Activated CD4-positive, alpha-beta memory T cell treated with anti-CD3 and anti-CD28 coated beads, Interleukin-2, amount 10 ng/mL, durations not matched to agents 7 days and 5 days (primary cell): ENCODE measurements at regions of chr1 and their contacts with region 1.

Region 1: DNA sequence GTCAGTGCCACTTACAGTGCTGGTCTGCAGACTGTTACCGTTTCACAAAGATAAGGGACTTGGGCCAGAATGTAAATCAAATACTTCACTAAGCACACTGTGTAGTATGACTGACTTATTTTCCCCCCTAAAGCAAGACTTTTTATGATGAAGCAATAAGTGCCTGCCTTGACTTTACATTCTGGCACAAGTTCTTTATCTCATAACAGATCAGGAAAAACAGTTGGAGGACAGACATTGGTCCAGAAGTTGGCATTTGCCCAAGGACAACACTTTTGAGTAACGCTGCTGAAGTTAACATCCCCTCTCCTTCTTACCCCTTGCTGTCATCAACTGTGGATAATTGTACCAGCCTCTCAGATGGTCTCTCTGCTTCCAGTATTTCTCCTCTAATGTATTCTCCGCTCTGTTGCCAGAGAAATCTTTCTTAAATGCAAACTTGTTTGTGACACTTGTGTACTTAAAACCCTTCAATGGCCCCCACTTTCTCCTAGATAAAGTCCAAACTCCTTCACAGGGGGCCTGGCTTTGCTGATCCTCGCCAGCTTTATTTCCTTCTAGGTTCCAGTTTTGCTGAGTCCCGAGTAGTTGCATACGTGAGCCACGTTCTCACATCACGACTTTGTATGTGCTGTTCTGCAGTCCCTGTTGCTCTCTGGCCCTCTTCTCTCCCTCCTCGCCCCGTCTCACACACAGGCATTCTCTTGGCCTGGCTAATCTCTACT is 45.7 kb downstream of the S1PR1 start:
- DNase-seq: no peak
- H3K4me3 Mint-ChIP-seq: no peak overlapping the region
- H3K27ac Mint-ChIP-seq: no peak overlapping the region
- H3K4me1 Mint-ChIP-seq: peaks cover 92% of the 10 kb centered on the region
- H3K27me3 Mint-ChIP-seq: no peaks in the 10 kb centered on the region

Region 2: DNA sequence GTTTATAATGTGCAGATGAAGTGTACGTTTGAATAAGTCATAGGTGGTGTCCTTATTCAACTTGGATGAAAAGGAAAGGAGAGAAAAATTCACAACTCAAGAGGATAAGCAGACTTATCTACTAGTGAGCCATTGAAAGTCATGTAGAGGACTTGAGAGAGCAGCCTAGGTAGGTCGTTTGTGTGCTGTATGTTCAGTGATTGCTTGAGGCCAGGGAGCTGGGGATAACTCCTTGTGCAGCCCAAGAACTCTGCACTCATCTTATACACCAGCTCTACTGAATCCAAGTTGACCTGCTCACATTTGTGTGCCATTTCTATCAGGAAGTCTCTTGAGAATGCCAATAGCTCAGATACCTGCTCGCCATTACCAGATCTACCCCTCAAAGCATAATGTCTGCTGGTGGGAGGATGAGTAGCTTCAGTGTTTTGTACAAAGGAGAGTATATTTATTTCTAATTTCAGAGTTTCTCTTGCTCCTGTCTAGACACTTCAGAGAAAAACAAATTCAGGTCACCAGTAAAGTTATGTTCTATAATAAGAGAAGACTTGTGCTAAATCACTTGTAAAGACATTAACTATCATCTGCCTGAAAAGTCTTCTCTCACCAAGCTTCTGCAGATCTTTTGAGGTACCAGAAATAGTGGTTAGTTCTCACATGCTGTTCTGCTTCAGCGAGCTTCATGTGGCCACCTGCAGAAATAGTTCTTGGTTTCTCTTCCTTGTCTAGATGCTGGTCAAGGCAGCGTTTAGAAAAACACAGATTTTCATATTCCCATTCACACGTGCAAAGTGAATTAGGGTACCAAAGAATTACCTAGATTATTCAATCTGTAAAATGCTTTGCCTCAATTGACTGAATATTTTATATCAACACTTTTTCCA is 34.8 kb before region 1 on chr1:
- CTCF ChIA-PET with region 1: interaction called, 26 read pairs
- POLR2A ChIA-PET with region 1: interaction called, 391 read pairs
- DNase-seq: no peak
- H3K4me3 Mint-ChIP-seq: no peak overlapping the region
- H3K27ac Mint-ChIP-seq: no peak overlapping the region
- H3K4me1 Mint-ChIP-seq: peaks cover 32% of the 10 kb centered on the region
- H3K27me3 Mint-ChIP-seq: no peaks in the 10 kb centered on the region

Region 3: GRCh38 chr1:101257500-101258325 is 24.8 kb before region 1 on chr1:
- CTCF ChIA-PET with region 1: interaction called, 26 read pairs
- POLR2A ChIA-PET with region 1: interaction called, 22 read pairs
- DNase-seq: peak; percentile 64
- H3K4me3 Mint-ChIP-seq: no peak overlapping the region
- H3K27ac Mint-ChIP-seq: peak overlapping the region; percentile 63
- H3K4me1 Mint-ChIP-seq: peaks cover 58% of the 10 kb centered on the region
- H3K27me3 Mint-ChIP-seq: no peaks in the 10 kb centered on the region

Region 4: GRCh38 chr1:101262630-101263348 is 19.7 kb before region 1 on chr1:
- CTCF ChIA-PET with region 1: interaction called, 30 read pairs
- POLR2A ChIA-PET with region 1: interaction called, 57 read pairs
- DNase-seq: peak; percentile 39
- H3K4me3 Mint-ChIP-seq: peak overlapping the region; percentile 23
- H3K27ac Mint-ChIP-seq: peak overlapping the region; percentile 70
- H3K4me1 Mint-ChIP-seq: peaks cover 84% of the 10 kb centered on the region
- H3K27me3 Mint-ChIP-seq: no peaks in the 10 kb centered on the region

Region 5: DNA sequence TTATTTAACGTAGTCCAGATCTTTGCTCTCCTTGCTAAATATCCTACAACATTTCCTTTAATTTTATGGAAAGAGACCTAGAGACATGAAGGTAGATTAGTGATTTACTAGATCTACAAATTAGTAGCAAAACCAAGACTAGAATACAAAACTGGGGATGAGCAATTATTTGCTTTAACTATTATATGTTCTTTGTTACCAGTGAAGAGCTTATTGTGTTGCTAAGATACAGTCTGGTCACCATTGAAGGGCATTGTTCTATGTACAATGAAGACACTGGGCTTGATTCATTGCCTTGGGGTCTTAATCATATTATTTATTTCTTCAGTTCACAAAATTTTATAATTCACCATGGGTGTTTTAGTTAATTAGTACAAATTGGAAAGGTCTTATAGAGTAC is 42.7 kb after region 1 on chr1:
- CTCF ChIA-PET with region 1: no interaction called
- POLR2A ChIA-PET with region 1: no interaction called
- DNase-seq: no peak
- H3K4me3 Mint-ChIP-seq: no peak overlapping the region
- H3K27ac Mint-ChIP-seq: no peak overlapping the region
- H3K4me1 Mint-ChIP-seq: no peaks in the 10 kb centered on the region
- H3K27me3 Mint-ChIP-seq: peaks cover 13% of the 10 kb centered on the region